ENCODE measurements at regions of chr10 and their contacts with region 1.

Region 1: GRCh38 chr10:27742195-27743011 is 3.2 kb downstream of the MKX start:
- DNase-seq: peak; percentile 76 to 83 (median 78)
- H3K4me3 ChIP-seq: peak overlapping the region; percentile 23 to 82 (median 62)
- H3K27ac ChIP-seq: no peak overlapping the region
- H3K4me1 ChIP-seq: peaks cover 0 to 60% (median 53%) of the 10 kb centered on the region in 4 experiments
- H3K27me3 ChIP-seq: peaks cover 25 to 87% (median 44%) of the 10 kb centered on the region in 5 experiments

Region 2: GRCh38 chr10:27701938-27702537 is 40.4 kb before region 1 on chr10:
- CTCF ChIA-PET with region 1: no interaction called
- POLR2A ChIA-PET with region 1: no interaction called
- DNase-seq: no peak
- H3K4me3 ChIP-seq: no peak overlapping the region
- H3K27ac ChIP-seq: no peak overlapping the region
- H3K4me1 ChIP-seq: no peaks in the 10 kb centered on the region
- H3K27me3 ChIP-seq: no peaks in the 10 kb centered on the region

Region 3: DNA sequence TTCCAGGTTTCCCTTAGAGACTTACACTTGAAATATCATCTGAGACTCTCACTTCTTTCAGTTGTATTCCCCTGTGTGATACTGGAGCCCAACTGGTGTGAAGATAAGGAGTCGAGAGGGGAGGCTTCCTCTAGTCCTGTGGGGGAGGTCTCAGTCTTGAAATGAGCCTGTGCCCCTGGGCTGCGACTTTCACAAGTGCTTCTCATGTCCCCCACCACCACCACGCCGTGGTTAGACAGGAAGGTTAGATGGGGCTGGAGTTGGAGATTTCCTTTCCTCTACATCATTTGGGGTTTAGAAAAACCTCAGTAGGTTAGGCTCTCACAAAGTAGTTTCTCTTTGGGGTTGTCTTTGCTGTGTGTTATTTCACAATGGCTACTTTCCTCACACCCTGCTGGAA is 28.8 kb after region 1 on chr10:
- CTCF ChIA-PET with region 1: no interaction called
- POLR2A ChIA-PET with region 1: no interaction called
- DNase-seq: peak in 2 of 3 donors; percentile 49 to 56
- H3K4me3 ChIP-seq: no peak overlapping the region
- H3K27ac ChIP-seq: no peak overlapping the region
- H3K4me1 ChIP-seq: no peaks in the 10 kb centered on the region
- H3K27me3 ChIP-seq: peaks cover 0 to 3% (median 0%) of the 10 kb centered on the region in 5 experiments

Region 4: GRCh38 chr10:28241741-28242399 is 499.5 kb after region 1 on chr10:
- CTCF ChIA-PET with region 1: interaction called, 13 read pairs
- POLR2A ChIA-PET with region 1: no interaction called
- DNase-seq: peak; percentile 62 to 82 (median 75)
- H3K4me3 ChIP-seq: no peak overlapping the region
- H3K27ac ChIP-seq: no peak overlapping the region
- H3K4me1 ChIP-seq: peaks cover 3 to 11% (median 9%) of the 10 kb centered on the region in 4 experiments
- H3K27me3 ChIP-seq: no peaks in the 10 kb centered on the region

Measured in common myeloid progenitor, CD34-positive (primary cell).